ENCODE measurements at regions of chr20 and their contacts with region 1.

Region 1: GRCh38 chr20:44866703-44867335 is 18.7 kb upstream of the YWHAB start:
- DNase-seq: no peak
- ATAC-seq: no peak
- H3K4me3 ChIP-seq: no peak overlapping the region
- H3K27ac ChIP-seq: no peak overlapping the region
- H3K4me1 ChIP-seq: peaks cover 21% of the 10 kb centered on the region
- H3K27me3 ChIP-seq: no peaks in the 10 kb centered on the region
- CTCF ChIP-seq: no peak
- POLR2A ChIP-seq: no peak

Region 2: GRCh38 chr20:44683263-44684046 is 183.4 kb before region 1 on chr20:
- intact Hi-C with region 1: loop called (anchors 5 kb)
- DNase-seq: peak; percentile 64 to 85 (median 72)
- ATAC-seq: peak; percentile 74
- H3K4me3 ChIP-seq: no peak overlapping the region
- H3K27ac ChIP-seq: no peak overlapping the region
- H3K4me1 ChIP-seq: peaks cover 6% of the 10 kb centered on the region
- H3K27me3 ChIP-seq: no peaks in the 10 kb centered on the region
- CTCF ChIP-seq: peak; percentile 22 to 72 (median 57)
- POLR2A ChIP-seq: no peak

Region 3: GRCh38 chr20:44750081-44750805 is 116.6 kb before region 1 on chr20:
- intact Hi-C with region 1: loop called (anchors 5 kb)
- DNase-seq: peak in 3 of 4 donors; percentile 18 to 26 (median 21)
- ATAC-seq: no peak
- H3K4me3 ChIP-seq: no peak overlapping the region
- H3K27ac ChIP-seq: no peak overlapping the region
- H3K4me1 ChIP-seq: peaks cover 32% of the 10 kb centered on the region
- H3K27me3 ChIP-seq: no peaks in the 10 kb centered on the region
- CTCF ChIP-seq: peak in 3 of 7 experiments; percentile 6 to 13 (median 8)
- POLR2A ChIP-seq: no peak

Region 4: DNA sequence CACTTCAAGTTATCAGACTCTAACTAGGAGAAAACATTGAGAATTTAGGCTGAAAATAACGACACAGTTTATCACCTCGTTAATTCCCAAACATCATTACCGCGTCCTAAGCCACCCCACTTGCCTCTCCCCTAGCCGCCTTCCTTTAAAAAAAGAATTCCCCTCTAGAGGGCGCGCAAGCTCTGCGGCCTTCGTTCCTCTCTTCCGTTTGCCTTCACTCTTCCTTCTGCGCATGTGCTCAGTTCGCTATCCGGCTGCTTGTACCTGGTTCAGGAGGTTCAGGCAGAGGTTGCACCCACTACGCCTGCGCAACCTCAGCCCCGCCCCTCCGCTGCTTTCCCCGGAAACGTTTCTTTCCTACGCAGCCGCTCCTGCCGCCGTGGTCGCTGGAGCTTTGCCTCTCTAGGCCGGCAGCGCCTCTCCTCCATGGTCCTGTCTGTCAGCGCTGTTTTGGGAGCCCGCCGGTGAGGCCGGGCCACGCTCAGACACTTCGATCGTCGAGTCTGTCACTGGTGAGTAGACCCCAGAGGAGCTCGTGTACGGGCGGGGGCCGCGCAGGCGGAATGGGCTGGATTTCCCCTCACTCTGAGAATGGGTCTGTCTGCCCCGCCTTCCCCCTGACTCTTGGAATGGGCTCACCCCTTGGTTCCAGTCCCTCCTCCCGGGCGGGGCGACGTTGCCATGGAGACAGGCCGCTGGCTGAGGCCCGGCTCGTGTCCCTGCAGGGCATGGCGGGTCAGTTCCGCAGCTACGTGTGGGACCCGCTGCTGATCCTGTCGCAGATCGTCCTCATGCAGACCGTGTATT is 496.2 kb after region 1 on chr20 and contains the start of gene SYS1:
- intact Hi-C with region 1: no loop called
- DNase-seq: peak; percentile 98 to 100 (median 98)
- ATAC-seq: peak; percentile 91
- H3K4me3 ChIP-seq: peak within 1 kb of the TSS; percentile 46 to 54
- H3K27ac ChIP-seq: peak within 1 kb of the TSS; percentile 85 to 97 (median 94)
- H3K4me1 ChIP-seq: peaks cover 60% of the 10 kb centered on the region
- H3K27me3 ChIP-seq: no peaks in the 10 kb centered on the region
- CTCF ChIP-seq: peak; percentile 84 to 99 (median 97)
- POLR2A ChIP-seq: peak; percentile 89 to 97 (median 97)
- total RNA-seq, gene SYS1: 14.2 to 15.3 TPM

Region 5: GRCh38 chr20:45470262-45470931 is 603.6 kb after region 1 on chr20:
- intact Hi-C with region 1: no loop called
- DNase-seq: peak; percentile 41 to 65 (median 58)
- ATAC-seq: peak; percentile 79
- H3K4me3 ChIP-seq: peak overlapping the region in 1 of 2 donors; percentile 21
- H3K27ac ChIP-seq: peak overlapping the region; percentile 38 to 72 (median 48)
- H3K4me1 ChIP-seq: peaks cover 22% of the 10 kb centered on the region
- H3K27me3 ChIP-seq: peaks cover 0 to 8% of the 10 kb centered on the region in 2 donors
- CTCF ChIP-seq: no peak
- POLR2A ChIP-seq: peak in 2 of 3 donors; percentile 34 to 50

Measured in body of pancreas (tissue), 4 donors.